Activated CD4-positive, alpha-beta T cell treated with anti-CD3 and anti-CD28 coated beads, Interleukin-2, amount 10 ng/mL, durations not matched to agents 24 days and 14 days (primary cell): ENCODE measurements at regions of chr14 and their contacts with region 1.

Region 1: DNA sequence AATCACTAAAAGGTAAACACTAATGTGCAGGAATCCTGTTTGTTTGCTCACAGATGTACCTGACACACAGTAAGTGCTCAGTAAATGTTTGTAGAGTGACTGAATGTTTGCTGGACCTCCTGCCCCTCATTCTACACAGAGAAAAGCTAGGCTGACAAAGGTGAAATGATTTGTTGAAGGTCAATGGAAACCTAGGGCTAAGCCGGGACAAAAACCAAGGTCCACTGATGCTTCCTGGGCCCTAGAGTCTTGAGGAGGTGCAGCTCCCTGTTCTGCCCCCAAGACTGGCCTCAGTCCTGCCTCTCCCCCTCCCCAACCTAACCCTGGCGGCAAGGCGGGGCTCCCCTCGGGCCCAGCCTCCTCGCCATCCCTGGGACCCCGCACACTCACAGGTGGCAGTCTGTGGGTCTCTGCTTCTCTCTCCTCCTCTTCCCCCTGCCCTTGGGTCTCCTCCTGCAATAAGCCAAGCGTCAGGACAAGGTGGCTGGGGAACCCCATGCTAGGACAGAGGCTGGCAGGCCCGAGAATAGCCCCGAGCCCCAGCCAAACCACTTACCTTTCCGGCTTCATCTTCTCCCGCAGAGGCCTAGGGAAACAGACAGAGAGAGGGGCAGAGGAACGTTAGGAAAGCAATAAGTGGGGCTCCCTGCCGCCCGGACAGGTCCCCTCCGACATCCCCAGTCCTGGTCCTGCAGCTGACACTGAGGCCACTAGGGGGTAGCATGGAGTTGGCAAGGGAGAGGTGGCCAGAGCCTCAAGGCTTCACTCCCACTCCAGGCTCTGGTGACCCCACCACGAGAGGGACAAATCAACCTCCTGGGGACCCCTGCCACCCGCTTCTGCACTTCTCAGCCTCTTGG is 9.3 kb downstream of the PGF start:
- DNase-seq: peak; percentile 94
- H3K4me3 Mint-ChIP-seq: no peak overlapping the region
- H3K27ac Mint-ChIP-seq: no peak overlapping the region
- H3K4me1 Mint-ChIP-seq: peaks cover 21% of the 10 kb centered on the region
- H3K27me3 Mint-ChIP-seq: peaks cover 2% of the 10 kb centered on the region

Region 2: DNA sequence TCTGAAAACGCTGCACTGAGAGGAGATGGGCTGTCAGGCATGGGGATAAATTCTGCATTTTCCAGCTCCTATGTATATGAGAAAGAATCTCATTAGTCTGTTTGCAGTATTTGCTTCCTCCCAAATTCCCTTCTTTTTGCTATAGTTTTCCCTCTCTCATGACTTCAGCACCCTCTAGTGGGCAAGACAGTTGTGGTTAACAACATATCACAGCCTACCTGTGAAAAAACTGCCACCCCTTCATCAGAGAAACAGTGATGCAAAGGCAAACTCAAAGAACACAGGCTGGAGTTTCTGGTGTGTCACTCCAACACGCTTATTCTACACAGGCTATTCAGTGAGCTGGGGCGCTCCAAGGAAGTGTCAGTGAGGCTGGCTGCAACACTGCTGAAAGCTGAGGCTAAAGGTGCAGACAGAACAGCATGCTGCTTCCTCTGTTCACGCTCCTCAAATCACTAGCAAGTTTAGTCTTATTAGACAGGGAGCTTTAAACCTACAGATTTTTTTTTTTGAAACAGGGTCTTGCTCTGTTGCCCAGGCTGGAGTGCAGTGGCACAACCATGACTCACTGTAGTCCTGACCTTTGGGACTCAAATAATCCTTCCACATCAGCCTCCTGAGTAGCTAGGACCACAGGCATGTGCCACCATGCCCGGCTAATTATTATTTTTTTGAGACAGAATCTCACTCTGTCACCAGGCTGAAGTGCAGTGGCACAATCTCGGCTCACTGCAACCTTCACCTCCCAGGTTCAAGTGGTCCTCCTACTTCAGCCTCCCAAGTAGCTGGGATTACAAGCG is 142.7 kb after region 1 on chr14:
- intact Hi-C with region 1: loop called (anchors 1 kb)
- DNase-seq: peak; percentile 86
- H3K4me3 Mint-ChIP-seq: no peak overlapping the region
- H3K27ac Mint-ChIP-seq: no peak overlapping the region
- H3K4me1 Mint-ChIP-seq: no peaks in the 10 kb centered on the region
- H3K27me3 Mint-ChIP-seq: no peaks in the 10 kb centered on the region

Region 3: DNA sequence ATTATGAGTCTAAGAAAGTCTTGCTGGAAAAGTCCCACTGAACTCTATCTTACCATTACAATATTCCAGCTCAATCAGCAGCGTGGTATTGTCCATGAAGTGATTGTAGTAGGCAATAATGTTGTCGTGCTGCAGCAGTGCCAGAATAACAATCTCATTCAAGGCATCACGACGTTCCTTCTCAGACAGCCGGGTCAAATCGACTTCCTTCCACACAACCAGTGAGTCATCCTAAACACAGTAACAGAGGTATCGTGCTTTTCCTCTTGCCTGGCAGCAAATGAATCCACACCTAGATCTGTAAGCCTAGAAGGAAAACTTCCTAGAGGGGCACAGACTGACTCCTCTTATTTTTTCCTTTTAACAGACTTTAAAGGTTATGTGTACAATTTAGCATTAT is 177.9 kb after region 1 on chr14:
- intact Hi-C with region 1: no loop called
- DNase-seq: peak; percentile 72
- H3K4me3 Mint-ChIP-seq: peak overlapping the region; percentile 51
- H3K27ac Mint-ChIP-seq: peak overlapping the region; percentile 79
- H3K4me1 Mint-ChIP-seq: peaks cover 42% of the 10 kb centered on the region
- H3K27me3 Mint-ChIP-seq: no peaks in the 10 kb centered on the region